CD8-positive, alpha-beta memory T cell (primary cell): ENCODE measurements at regions of chr17 and their contacts with region 1.

Region 1: GRCh38 chr17:7435221-7435675 is at the start of gene TMEM102:
- DNase-seq: peak; percentile 96 to 99 (median 98)
- H3K4me3 ChIP-seq: peak within 1 kb of the TSS; percentile 92
- H3K4me3 Mint-ChIP-seq: peak within 1 kb of the TSS; percentile 88 to 98 (median 96)
- H3K27ac ChIP-seq: peak within 1 kb of the TSS; percentile 77
- H3K27ac Mint-ChIP-seq: peak within 1 kb of the TSS; percentile 93 to 99 (median 97)
- H3K4me1 ChIP-seq: peaks cover 44% of the 10 kb centered on the region
- H3K4me1 Mint-ChIP-seq: peaks cover 30 to 48% (median 42%) of the 10 kb centered on the region in 3 donors
- H3K27me3 ChIP-seq: peaks cover 17% of the 10 kb centered on the region
- H3K27me3 Mint-ChIP-seq: peaks cover 14 to 18% of the 10 kb centered on the region in 2 donors
- total RNA-seq, gene TMEM102: 11.1 to 11.9 TPM

Region 2: GRCh38 chr17:7064261-7064660 is 371.0 kb before region 1 on chr17:
- CTCF ChIA-PET with region 1: no interaction called
- POLR2A ChIA-PET with region 1: no interaction called
- DNase-seq: no peak
- H3K4me3 ChIP-seq: no peak overlapping the region
- H3K4me3 Mint-ChIP-seq: no peak overlapping the region
- H3K27ac ChIP-seq: no peak overlapping the region
- H3K27ac Mint-ChIP-seq: no peak overlapping the region
- H3K4me1 ChIP-seq: no peaks in the 10 kb centered on the region
- H3K4me1 Mint-ChIP-seq: no peaks in the 10 kb centered on the region
- H3K27me3 ChIP-seq: peaks cover 5% of the 10 kb centered on the region
- H3K27me3 Mint-ChIP-seq: peaks cover 11 to 28% of the 10 kb centered on the region in 2 donors

Region 3: GRCh38 chr17:7252176-7253043 is 182.8 kb before region 1 on chr17 and contains the start of gene ELP5:
- CTCF ChIA-PET with region 1: no interaction called
- POLR2A ChIA-PET with region 1: no interaction called
- DNase-seq: peak; percentile 82 to 99 (median 87)
- H3K4me3 ChIP-seq: peak within 1 kb of the TSS; percentile 85
- H3K4me3 Mint-ChIP-seq: peak within 1 kb of the TSS; percentile 94 to 98 (median 96)
- H3K27ac ChIP-seq: peak within 1 kb of the TSS; percentile 97
- H3K27ac Mint-ChIP-seq: peak within 1 kb of the TSS; percentile 97 to 100 (median 99)
- H3K4me1 ChIP-seq: peaks cover 33% of the 10 kb centered on the region
- H3K4me1 Mint-ChIP-seq: peaks cover 38 to 55% (median 41%) of the 10 kb centered on the region in 3 donors
- H3K27me3 ChIP-seq: no peaks in the 10 kb centered on the region
- H3K27me3 Mint-ChIP-seq: peaks cover 0 to 2% of the 10 kb centered on the region in 2 donors
- total RNA-seq, gene ELP5: 106 to 111 TPM

Region 4: GRCh38 chr17:7369825-7370224 is 65.4 kb before region 1 on chr17:
- CTCF ChIA-PET with region 1: interaction called, 14 read pairs
- POLR2A ChIA-PET with region 1: no interaction called
- DNase-seq: no peak
- H3K4me3 ChIP-seq: no peak overlapping the region
- H3K4me3 Mint-ChIP-seq: no peak overlapping the region
- H3K27ac ChIP-seq: no peak overlapping the region
- H3K27ac Mint-ChIP-seq: no peak overlapping the region
- H3K4me1 ChIP-seq: no peaks in the 10 kb centered on the region
- H3K4me1 Mint-ChIP-seq: no peaks in the 10 kb centered on the region
- H3K27me3 ChIP-seq: no peaks in the 10 kb centered on the region
- H3K27me3 Mint-ChIP-seq: peaks cover 2 to 4% of the 10 kb centered on the region in 2 donors

Region 5: DNA sequence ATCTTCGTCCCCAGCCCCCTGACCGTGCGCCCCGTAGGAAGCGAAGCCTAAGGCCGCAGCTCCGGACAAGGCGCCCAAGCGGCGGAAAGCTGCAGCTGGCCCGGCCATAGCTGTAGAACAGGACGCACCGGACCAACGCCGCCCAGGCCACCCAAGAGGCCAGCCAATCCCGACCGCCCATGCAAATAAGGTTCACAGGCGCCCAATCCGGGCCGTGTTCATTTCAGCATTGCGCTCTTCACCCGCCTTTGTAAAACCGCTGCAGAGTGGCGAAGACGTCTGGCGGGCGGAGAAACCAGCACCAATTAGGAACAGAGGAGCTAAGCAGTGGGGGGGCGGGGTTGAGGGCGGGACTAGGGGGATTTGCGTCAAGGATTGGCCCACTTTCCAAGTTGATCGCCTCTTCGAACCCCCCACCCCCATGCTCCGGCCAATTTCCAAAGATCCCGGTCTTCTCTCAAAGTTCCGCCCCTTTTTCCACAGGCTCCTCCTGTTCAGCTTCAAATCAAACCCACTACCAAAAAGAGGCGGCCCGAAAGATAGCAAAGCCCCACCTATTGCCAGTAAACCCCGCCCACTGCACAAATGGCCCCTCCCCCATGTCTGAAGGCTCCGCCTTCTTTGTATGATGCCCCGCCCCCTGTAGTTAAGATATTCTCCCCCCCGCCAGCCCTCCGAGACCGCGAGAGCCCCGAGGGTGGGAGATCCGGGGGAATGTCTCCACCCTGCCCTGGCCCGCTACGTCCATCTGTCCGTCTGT is 31.1 kb before region 1 on chr17 and contains the start of gene TMEM256:
- CTCF ChIA-PET with region 1: interaction called, 20 read pairs
- POLR2A ChIA-PET with region 1: interaction called, 4 read pairs
- DNase-seq: peak; percentile 91 to 97 (median 95)
- H3K4me3 ChIP-seq: peak within 1 kb of the TSS; percentile 90
- H3K4me3 Mint-ChIP-seq: peak within 1 kb of the TSS; percentile 90 to 99 (median 97)
- H3K27ac ChIP-seq: peak within 1 kb of the TSS; percentile 67
- H3K27ac Mint-ChIP-seq: peak within 1 kb of the TSS; percentile 83 to 99 (median 96)
- H3K4me1 ChIP-seq: peaks cover 16% of the 10 kb centered on the region
- H3K4me1 Mint-ChIP-seq: peaks cover 17 to 36% (median 21%) of the 10 kb centered on the region in 3 donors
- H3K27me3 ChIP-seq: no peaks in the 10 kb centered on the region
- H3K27me3 Mint-ChIP-seq: peaks cover 0 to 2% of the 10 kb centered on the region in 2 donors
- total RNA-seq, gene TMEM256: 45.4 to 51.4 TPM

Region 6: GRCh38 chr17:7496470-7497183 is 61.4 kb after region 1 on chr17:
- CTCF ChIA-PET with region 1: interaction called, 14 read pairs
- POLR2A ChIA-PET with region 1: interaction called, 3 read pairs
- DNase-seq: no peak
- H3K4me3 ChIP-seq: no peak overlapping the region
- H3K4me3 Mint-ChIP-seq: peak overlapping the region in 2 of 7 donors; percentile 31 to 47
- H3K27ac ChIP-seq: no peak overlapping the region
- H3K27ac Mint-ChIP-seq: peak overlapping the region in 4 of 8 donors; percentile 25 to 77 (median 50)
- H3K4me1 ChIP-seq: peaks cover 9% of the 10 kb centered on the region
- H3K4me1 Mint-ChIP-seq: peaks cover 22 to 35% (median 28%) of the 10 kb centered on the region in 3 donors
- H3K27me3 ChIP-seq: no peaks in the 10 kb centered on the region
- H3K27me3 Mint-ChIP-seq: peaks cover 0 to 5% of the 10 kb centered on the region in 2 donors

Region 7: DNA sequence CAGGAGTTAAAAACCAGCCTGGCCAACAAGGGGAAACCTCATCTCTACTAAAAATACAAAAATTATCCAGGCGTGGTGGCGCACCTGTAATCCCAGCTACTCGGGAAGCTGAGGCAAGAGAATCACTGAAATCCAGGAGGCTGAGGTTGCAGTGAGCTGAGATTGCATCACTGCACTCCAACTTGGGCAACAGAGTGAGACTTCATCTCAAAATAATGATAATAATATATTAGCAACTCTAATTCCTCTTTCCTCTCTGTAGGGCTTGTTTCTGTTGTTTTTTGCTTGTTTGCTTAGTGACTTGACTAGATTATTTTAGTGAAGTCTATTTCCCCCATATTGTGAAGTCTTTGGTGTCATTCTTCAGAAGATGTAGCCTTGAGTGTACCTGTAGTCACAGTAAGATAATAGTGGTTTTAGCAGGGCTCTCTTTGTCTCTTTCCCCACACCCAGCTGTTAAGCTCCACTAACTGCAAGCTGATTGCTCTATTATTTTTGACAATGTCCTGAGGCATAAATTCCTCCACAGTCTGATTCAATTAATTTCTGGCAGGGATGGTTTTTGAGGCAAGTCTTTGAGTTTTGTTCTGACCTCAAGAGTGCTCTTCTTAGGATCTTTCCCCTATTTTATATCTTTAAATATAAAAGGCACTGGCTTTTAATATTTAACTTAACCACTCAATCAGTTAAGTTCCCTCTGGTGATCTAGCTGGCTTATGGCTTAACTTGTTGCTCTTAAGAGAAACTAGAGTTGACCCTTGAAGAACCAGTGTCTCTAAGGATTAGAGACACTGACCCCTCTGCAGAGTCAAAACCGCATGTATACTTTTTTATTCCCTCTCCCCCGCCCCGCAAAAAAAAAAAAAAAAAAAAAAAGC is 95.0 kb after region 1 on chr17:
- CTCF ChIA-PET with region 1: no interaction called
- POLR2A ChIA-PET with region 1: no interaction called
- DNase-seq: no peak
- H3K4me3 ChIP-seq: no peak overlapping the region
- H3K4me3 Mint-ChIP-seq: no peak overlapping the region
- H3K27ac ChIP-seq: no peak overlapping the region
- H3K27ac Mint-ChIP-seq: no peak overlapping the region
- H3K4me1 ChIP-seq: no peaks in the 10 kb centered on the region
- H3K4me1 Mint-ChIP-seq: no peaks in the 10 kb centered on the region
- H3K27me3 ChIP-seq: no peaks in the 10 kb centered on the region
- H3K27me3 Mint-ChIP-seq: no peaks in the 10 kb centered on the region

Region 8: DNA sequence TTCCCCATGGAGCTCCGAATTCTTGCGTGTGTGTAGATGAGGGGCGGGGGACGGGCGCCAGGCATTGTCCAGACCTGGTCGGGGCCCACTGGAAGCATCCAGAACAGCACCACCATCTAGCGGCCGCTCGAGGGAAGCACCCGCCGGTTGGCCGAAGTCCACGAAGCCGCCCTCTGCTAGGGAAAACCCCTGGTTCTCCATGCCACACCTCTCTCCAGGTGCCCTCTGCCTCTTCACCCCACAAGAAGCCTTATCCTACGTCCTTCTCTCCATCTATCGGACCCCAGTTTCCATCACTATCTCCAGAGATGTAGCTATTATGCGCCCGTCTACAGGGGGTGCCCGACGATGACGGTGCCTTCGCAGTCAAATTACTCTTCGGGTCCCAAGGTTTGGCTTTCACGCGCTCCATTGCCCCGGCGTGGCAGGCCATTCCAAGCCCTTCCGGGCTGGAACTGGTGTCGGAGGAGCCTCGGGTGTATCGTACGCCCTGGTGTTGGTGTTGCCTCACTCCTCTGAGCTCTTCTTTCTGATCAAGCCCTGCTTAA is 125.9 kb after region 1 on chr17:
- CTCF ChIA-PET with region 1: interaction called, 22 read pairs
- POLR2A ChIA-PET with region 1: interaction called, 8 read pairs
- DNase-seq: peak; percentile 74 to 85 (median 81)
- H3K4me3 ChIP-seq: peak overlapping the region; percentile 95
- H3K4me3 Mint-ChIP-seq: peak overlapping the region; percentile 88 to 97 (median 89)
- H3K27ac ChIP-seq: peak overlapping the region; percentile 94
- H3K27ac Mint-ChIP-seq: peak overlapping the region; percentile 91 to 99 (median 98)
- H3K4me1 ChIP-seq: peaks cover 37% of the 10 kb centered on the region
- H3K4me1 Mint-ChIP-seq: peaks cover 23 to 33% (median 25%) of the 10 kb centered on the region in 3 donors
- H3K27me3 ChIP-seq: no peaks in the 10 kb centered on the region
- H3K27me3 Mint-ChIP-seq: peaks cover 0 to 4% of the 10 kb centered on the region in 2 donors

Region 9: GRCh38 chr17:7687908-7688807 is 252.9 kb after region 1 on chr17 and contains the start of gene WRAP53:
- CTCF ChIA-PET with region 1: interaction called, 37 read pairs
- POLR2A ChIA-PET with region 1: interaction called, 36 read pairs
- DNase-seq: peak; percentile 88 to 96 (median 94)
- H3K4me3 ChIP-seq: peak within 1 kb of the TSS; percentile 99
- H3K4me3 Mint-ChIP-seq: peak within 1 kb of the TSS; percentile 93 to 99 (median 98)
- H3K27ac ChIP-seq: peak within 1 kb of the TSS; percentile 99
- H3K27ac Mint-ChIP-seq: peak within 1 kb of the TSS; percentile 98 to 100 (median 100)
- H3K4me1 ChIP-seq: peaks cover 37% of the 10 kb centered on the region
- H3K4me1 Mint-ChIP-seq: peaks cover 39 to 55% (median 44%) of the 10 kb centered on the region in 3 donors
- H3K27me3 ChIP-seq: no peaks in the 10 kb centered on the region
- H3K27me3 Mint-ChIP-seq: peaks cover 0 to 7% of the 10 kb centered on the region in 2 donors
- total RNA-seq, gene WRAP53: 29.1 to 31.3 TPM